HEK293T (cell line): ENCODE measurements at regions of chr2 and their contacts with region 1.

Region 1: GRCh38 chr2:131154071-131154531 is 49.0 kb downstream of the PLEKHB2 start:
- DNase-seq: peak; percentile 82

Region 2: GRCh38 chr2:131064589-131065512 is 89.2 kb before region 1 on chr2:
- CTCF ChIA-PET with region 1: no interaction called
- POLR2A ChIA-PET with region 1: no interaction called
- DNase-seq: no peak

Region 3: DNA sequence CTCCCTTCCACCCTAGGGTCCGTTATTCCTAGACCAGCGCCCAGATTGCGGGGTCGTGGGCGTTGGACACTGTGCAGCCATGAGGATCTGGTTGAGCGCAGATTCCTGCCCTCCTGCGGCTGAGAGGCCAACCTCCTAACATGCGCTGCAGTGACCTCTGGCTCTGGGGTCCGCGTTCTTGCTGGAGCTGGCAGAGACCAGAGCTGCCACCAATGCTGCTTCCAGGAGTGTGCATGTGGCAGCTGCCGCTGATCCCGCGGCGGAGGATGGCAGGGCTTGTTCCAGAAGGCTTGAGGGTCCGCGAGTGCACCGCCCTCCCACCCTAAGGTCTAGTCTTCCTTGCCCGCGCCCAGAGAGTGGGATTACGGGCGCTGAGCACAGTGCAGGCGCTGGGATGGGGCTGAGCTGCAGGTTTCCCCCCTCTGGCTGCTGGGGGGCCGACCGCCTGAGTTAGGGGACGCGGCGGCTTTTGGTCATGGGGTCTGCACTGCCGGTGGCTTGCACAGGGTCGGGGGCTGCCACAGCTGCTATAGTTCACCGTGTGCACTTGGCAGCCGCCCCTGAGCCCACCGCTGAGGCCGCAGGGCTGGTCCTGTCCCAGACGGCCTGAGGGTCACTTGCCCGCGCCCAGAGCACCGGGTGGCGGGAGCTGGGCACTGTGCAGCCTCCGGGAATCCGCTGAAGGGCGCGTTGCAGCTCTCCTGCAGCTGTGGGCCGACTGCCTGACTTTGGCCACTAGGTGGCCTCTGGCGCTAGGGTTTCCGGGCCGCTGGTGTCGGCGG is 519.5 kb after region 1 on chr2:
- CTCF ChIA-PET with region 1: interaction called, 13 read pairs
- POLR2A ChIA-PET with region 1: no interaction called
- DNase-seq: peak; percentile 67